Sigmoid colon (tissue), 7 donors: ENCODE measurements at regions of chr1 and their contacts with region 1.

Region 1: DNA sequence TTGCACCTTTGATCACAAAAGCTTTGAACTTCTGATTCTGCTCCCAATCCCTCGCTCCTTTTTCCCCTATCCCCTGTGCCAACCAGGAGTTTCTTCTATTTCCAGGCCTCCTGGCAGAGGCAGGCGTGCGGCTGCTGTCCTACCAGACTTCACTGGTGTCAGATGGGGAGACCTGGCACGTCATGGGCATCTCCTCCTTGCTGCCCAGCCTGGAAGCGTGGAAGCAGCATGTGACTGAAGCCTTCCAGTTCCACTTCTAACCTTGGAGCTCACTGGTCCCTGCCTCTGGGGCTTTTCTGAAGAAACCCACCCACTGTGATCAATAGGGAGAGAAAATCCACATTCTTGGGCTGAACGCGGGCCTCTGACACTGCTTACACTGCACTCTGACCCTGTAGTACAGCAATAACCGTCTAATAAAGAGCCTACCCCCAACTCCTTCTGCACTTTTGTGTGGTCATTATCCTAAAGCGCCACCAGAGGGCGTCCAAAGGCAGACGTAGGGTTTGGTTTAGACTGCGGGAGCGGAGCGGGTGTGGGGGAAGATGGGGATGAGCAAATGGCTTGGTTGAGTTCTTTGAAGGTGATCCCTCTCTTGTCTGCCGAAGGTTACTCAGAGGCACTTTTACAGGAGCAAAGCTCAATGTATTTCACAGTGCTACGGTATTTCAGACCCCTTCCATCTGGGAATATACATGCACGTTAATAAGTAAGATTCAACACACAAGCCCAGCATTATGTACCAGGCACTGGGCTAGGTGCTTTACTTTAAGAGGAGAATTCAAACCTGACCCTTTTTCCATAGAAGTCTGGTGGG is 24.7 kb downstream of the HMGCS2 start:
- DNase-seq: peak; percentile 81
- H3K4me3 ChIP-seq: no peak overlapping the region
- H3K27ac ChIP-seq: peak overlapping the region in 3 of 4 donors; percentile 23 to 38 (median 30)
- H3K4me1 ChIP-seq: peaks cover 0 to 30% (median 24%) of the 10 kb centered on the region in 4 donors
- H3K27me3 ChIP-seq: no peaks in the 10 kb centered on the region
- CTCF ChIP-seq: peak; percentile 60 to 83 (median 70)
- EP300 ChIP-seq: no peak
- POLR2A ChIP-seq: no peak

Region 2: GRCh38 chr1:119409731-119410130 is 334.3 kb before region 1 on chr1:
- intact Hi-C with region 1: no loop called
- DNase-seq: no peak
- H3K4me3 ChIP-seq: no peak overlapping the region
- H3K27ac ChIP-seq: no peak overlapping the region
- H3K4me1 ChIP-seq: no peaks in the 10 kb centered on the region
- H3K27me3 ChIP-seq: no peaks in the 10 kb centered on the region
- CTCF ChIP-seq: no peak
- EP300 ChIP-seq: no peak
- POLR2A ChIP-seq: no peak

Region 3: GRCh38 chr1:119482531-119483425 is 261.2 kb before region 1 on chr1:
- intact Hi-C with region 1: no loop called
- DNase-seq: no peak
- H3K4me3 ChIP-seq: no peak overlapping the region
- H3K27ac ChIP-seq: no peak overlapping the region
- H3K4me1 ChIP-seq: no peaks in the 10 kb centered on the region
- H3K27me3 ChIP-seq: no peaks in the 10 kb centered on the region
- CTCF ChIP-seq: no peak
- EP300 ChIP-seq: no peak
- POLR2A ChIP-seq: no peak

Region 4: GRCh38 chr1:119779869-119780356 is 35.9 kb after region 1 on chr1:
- intact Hi-C with region 1: no loop called
- DNase-seq: peak; percentile 78
- H3K4me3 ChIP-seq: peak overlapping the region in 1 of 4 donors; percentile 10
- H3K27ac ChIP-seq: peak overlapping the region; percentile 8 to 46 (median 30)
- H3K4me1 ChIP-seq: peaks cover 0 to 26% (median 17%) of the 10 kb centered on the region in 4 donors
- H3K27me3 ChIP-seq: no peaks in the 10 kb centered on the region
- CTCF ChIP-seq: no peak
- EP300 ChIP-seq: no peak
- POLR2A ChIP-seq: no peak

Region 5: DNA sequence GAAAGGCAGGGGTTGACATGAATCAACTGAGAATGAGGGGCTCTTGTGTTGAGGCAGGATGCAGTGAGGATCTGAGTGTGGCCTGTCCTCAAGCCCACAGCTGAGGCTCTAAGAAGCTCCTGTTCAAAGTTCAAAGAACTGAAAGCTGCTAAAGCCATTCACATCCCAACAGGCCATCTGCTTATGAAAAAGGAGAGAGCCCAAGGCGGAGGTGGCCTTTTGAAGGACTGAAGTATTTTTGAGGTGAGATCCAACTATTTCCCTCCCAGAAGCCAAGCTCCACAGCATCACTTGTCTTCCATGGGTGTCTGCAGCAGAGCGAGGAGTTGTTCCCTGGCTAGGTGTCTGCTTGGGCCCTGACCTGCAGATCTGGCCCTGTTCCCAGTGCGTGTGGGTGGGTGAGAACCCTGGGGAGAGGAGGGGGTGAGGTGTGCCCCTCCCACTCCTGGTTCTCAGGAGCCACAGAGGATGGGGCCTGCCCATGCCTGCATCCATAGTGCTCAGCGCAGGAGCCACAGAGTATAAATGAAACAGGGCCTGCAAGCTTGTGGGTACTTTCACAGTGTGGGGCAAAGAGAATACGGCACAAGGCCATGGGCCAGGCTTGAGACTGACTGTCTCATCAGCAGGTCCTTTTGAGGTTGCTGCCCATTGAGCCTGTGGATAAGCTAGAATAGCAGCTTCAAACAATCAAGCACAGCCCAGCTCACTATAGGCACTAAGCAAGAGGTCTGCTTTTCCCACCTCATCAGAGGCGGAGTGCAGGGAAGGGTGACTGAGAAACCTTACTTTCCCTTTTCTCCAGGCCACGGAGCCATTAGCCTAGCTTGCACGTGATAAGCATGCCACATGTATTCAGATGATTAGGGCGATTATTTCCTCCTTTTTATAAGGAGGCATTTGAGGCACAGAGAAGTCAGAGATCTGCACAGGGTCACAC is 51.5 kb after region 1 on chr1:
- intact Hi-C with region 1: loop called (anchors 5 kb)
- DNase-seq: no peak
- H3K4me3 ChIP-seq: no peak overlapping the region
- H3K27ac ChIP-seq: peak overlapping the region; percentile 7 to 67 (median 34)
- H3K4me1 ChIP-seq: peaks cover 0 to 28% (median 27%) of the 10 kb centered on the region in 4 donors
- H3K27me3 ChIP-seq: no peaks in the 10 kb centered on the region
- CTCF ChIP-seq: no peak
- EP300 ChIP-seq: no peak
- POLR2A ChIP-seq: no peak

Region 6: GRCh38 chr1:119808972-119809550 is 65.1 kb after region 1 on chr1:
- intact Hi-C with region 1: loop called (anchors 2 kb)
- DNase-seq: peak; percentile 85
- H3K4me3 ChIP-seq: no peak overlapping the region
- H3K27ac ChIP-seq: no peak overlapping the region
- H3K4me1 ChIP-seq: peaks cover 0 to 10% (median 4%) of the 10 kb centered on the region in 4 donors
- H3K27me3 ChIP-seq: no peaks in the 10 kb centered on the region
- CTCF ChIP-seq: peak in 3 of 4 experiments; percentile 49 to 78 (median 62)
- EP300 ChIP-seq: no peak
- POLR2A ChIP-seq: no peak

Region 7: DNA sequence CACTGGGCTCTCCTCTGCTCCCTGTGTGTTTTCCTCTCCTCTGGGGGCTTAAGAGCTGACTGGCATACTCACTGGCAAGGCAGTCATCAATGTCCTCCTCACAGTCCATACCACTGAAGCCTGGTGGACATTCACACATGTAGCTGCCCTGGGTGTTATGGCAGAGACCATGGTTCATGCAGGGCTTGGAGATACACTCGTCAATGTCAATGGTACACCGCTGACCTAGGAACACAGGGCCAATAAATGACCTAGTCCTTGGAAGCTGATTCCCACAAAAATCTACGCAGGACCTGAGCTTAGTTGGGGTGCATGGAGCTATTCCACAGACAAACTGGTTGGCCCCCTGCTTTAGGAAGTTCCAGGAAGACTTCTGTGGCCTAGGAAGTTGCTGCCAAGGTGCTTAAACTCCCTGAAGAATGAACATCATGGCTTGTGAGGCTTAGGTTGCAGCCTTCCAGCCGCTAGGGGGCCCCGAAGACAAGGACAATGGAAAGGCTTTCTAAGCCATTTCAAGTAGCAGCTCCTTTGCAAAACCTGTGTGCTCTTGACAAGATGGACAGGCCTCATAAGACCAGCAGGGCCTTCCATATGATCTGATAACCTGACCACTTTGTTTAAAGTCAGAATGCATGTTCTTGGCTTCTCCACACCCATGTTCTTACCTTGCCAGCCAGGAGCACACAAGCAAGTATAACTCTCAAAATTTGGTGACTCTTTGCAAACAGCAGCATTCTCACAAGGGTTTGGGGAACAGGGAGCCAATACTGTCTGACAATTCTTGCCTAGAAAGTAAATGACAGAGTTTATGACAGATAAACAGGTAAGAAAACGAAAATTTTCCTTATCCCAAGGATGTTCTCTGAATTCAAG is 204.6 kb after region 1 on chr1:
- intact Hi-C with region 1: loop called (anchors 10 kb)
- DNase-seq: peak; percentile 86
- H3K4me3 ChIP-seq: no peak overlapping the region
- H3K27ac ChIP-seq: peak overlapping the region in 1 of 4 donors; percentile 2
- H3K4me1 ChIP-seq: peaks cover 0 to 21% (median 5%) of the 10 kb centered on the region in 4 donors
- H3K27me3 ChIP-seq: no peaks in the 10 kb centered on the region
- CTCF ChIP-seq: peak; percentile 67 to 87 (median 70)
- EP300 ChIP-seq: no peak
- POLR2A ChIP-seq: no peak